ENCODE measurements at regions of chr17 and their contacts with region 1.

Region 1: DNA sequence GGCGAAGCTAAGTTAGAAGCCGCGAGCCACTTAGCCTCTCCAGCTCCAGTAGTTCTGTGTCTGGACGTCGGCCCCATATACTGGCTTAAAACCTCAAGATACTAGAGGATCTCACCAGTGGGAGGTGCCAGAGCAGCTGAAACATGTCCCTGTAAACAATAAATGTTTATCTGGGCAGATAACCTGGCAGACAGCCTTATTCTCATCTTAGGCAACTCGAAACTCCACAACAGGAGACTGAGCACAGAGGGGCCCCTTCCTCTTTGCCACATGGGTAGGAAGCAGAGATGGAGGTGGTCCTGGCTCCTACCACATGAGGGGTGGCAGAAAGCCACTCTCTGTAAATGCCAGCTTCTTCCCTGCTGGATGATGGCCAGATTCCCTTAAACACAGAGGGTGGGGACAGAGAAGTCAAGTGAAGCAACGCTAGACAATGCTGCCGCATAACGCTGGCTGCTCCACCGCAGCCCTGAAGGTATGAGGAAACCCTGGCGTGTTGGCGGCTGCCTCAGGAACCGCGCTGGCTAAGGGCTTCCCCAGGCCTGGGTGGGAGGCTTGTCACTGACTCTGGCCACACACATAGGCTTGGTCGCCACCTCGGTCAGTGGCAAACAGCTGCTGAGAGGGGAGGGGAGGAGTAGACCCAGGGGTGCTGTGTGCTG is 67.9 kb downstream of the HIC1 start:
- DNase-seq: peak; percentile 56
- CTCF ChIP-seq: no peak

Region 2: GRCh38 chr17:2111719-2112118 is 11.1 kb before region 1 on chr17:
- CTCF ChIA-PET with region 1: interaction called, 20 read pairs
- POLR2A ChIA-PET with region 1: no interaction called
- DNase-seq: no peak
- CTCF ChIP-seq: no peak

Region 3: GRCh38 chr17:2137342-2138098 is 14.7 kb after region 1 on chr17:
- CTCF ChIA-PET with region 1: interaction called, 48 read pairs
- POLR2A ChIA-PET with region 1: interaction called, 3 read pairs
- DNase-seq: peak; percentile 73
- CTCF ChIP-seq: no peak

Region 4: GRCh38 chr17:2146132-2146871 is 23.5 kb after region 1 on chr17:
- CTCF ChIA-PET with region 1: interaction called, 48 read pairs
- POLR2A ChIA-PET with region 1: no interaction called
- DNase-seq: no peak
- CTCF ChIP-seq: no peak

Region 5: DNA sequence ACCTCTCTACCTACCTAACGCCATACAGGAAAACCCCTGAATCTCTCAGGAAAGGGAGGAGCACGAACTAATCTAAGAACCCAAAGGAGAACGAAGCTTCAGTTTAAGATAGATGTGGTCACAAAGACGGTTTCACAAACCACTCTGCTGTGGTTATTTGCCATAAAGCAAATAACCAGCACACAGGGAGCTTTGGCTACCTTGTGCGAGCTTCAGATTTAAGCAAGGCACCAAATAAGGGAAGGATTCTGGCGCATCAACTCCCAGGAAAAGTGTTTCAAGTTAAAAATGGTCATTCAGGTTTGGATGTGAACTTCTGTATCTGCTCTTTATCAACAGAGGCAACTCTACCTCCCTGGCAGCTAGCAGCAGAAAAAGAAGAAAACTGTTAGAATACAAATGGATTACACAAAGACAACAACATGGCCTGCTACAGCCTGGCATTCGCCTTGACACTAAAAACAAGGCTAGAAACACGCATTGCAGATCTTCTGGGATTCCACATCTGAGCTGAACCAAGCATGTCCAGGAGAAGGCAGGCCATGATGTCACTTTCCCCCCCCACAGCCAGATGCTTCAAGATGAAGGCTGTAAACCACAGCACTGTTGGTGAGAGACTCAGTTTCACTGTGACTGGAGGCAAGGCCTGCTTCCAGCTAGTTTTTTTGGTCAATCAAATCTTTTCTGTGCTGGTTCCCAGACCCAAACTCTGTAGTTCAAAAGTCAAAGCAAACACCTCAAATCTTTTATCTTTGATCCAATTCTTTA is 137.2 kb after region 1 on chr17:
- CTCF ChIA-PET with region 1: no interaction called
- POLR2A ChIA-PET with region 1: no interaction called
- DNase-seq: peak; percentile 73
- CTCF ChIP-seq: no peak